OCI-LY7 (cell line): ENCODE measurements at regions of chr19 and their contacts with region 1.

Region 1: DNA sequence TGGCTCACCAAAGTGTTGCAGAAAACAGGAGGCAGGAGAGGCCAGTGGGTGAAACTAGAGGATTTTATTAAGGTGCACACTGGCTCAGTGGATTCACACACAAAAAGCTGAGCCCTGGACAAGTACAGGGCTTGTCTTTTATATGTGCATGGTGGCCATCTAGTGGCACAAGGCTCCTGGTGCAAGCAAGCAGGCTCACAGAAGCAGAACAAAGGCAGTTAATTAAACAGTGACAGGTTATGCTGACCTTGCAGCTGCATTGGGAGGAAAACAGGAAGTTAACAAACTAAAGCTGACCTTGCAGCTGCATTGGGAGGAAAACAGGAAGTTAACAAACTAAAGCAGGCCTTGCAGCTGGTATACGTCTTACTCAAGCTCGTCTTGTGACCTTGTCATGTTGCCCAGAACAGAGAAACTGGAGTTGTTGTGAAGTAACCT is 65.3 kb upstream of the ZNF681 start:
- DNase-seq: peak; percentile 96
- H3K4me3 ChIP-seq: no peak overlapping the region
- H3K27ac ChIP-seq: peak overlapping the region; percentile 99
- H3K4me1 ChIP-seq: peaks cover 12% of the 10 kb centered on the region
- CTCF ChIP-seq: peak; percentile 84

Region 2: GRCh38 chr19:23436944-23437343 is 387.0 kb before region 1 on chr19:
- CTCF ChIA-PET with region 1: no interaction called
- POLR2A ChIA-PET with region 1: no interaction called
- intact Hi-C with region 1: loop called (anchors 1 kb)
- DNase-seq: peak; percentile 39
- H3K4me3 ChIP-seq: no peak overlapping the region
- H3K27ac ChIP-seq: no peak overlapping the region
- H3K4me1 ChIP-seq: no peaks in the 10 kb centered on the region
- CTCF ChIP-seq: peak; percentile 34

Region 3: DNA sequence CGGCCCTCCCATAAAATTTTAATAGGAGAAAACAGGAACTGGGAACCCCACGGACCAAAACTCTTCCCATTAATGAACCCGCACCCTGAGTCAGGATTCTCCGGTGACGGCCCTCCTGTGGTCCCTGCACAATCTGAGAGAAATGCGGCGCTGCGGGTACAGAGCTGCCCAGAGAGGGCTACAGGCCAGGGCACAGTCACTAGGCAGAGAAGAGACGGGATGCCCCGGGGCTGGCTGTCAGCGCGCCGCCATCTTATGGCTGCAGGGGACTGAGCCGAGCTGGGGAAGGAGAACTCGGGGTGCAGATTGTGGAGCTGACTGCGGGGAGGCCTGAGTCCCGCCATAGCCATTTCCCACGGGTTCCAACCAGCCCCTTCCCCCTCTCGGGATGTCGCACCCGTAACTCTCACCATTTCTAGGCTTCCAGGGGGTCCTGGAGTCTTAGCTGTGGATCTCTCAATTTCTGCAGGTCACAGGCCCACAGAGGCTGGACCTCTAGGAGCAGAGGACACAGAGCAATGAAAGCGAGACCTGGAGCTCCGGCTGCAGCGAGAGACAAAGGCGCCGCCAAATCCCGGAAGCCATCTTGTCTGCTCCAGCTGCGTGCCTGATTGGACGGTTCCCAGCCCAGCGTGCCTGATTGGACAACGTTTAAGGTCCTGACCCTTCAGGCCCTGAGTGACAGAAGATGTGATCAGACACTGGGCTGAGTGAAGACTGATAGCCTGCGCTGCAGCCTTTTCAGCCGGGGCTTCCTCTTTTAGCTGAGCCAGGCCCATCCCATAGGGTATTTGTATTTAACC is 137.1 kb before region 1 on chr19 and contains the start of gene ZNF675:
- CTCF ChIA-PET with region 1: no interaction called
- POLR2A ChIA-PET with region 1: no interaction called
- intact Hi-C with region 1: loop called (anchors 5 kb)
- DNase-seq: peak; percentile 96
- H3K4me3 ChIP-seq: peak within 1 kb of the TSS; percentile 77
- H3K27ac ChIP-seq: peak within 1 kb of the TSS; percentile 83
- H3K4me1 ChIP-seq: peaks cover 16% of the 10 kb centered on the region
- CTCF ChIP-seq: peak; percentile 19; the same call in 1 of the 2 replicates
- total RNA-seq, gene ZNF675: 22.6 and 29.7 TPM in 2 replicates